HepG2 (cell line): ENCODE measurements at regions of chr5 and their contacts with region 1.

Region 1: GRCh38 chr5:60944904-60945812 is at the starts of genes ERCC8 and NDUFAF2:
- DNase-seq: peak; percentile 91
- ATAC-seq: peak; percentile 99
- H3K4me3 ChIP-seq: peak within 1 kb of the TSS; percentile 87 to 96 (median 90)
- H3K27ac ChIP-seq: peak within 1 kb of the TSS; percentile 79
- H3K4me1 ChIP-seq: peaks cover 52% of the 10 kb centered on the region
- H3K27me3 ChIP-seq: no peaks in the 10 kb centered on the region; a peak in 1 of 5 replicates
- CTCF ChIP-seq: 0 out of 2 replicates have a peak, but pooled peaks have one; percentile 3
- EP300 ChIP-seq: no peak
- POLR2A ChIP-seq: peak; percentile 69 to 78
- RAD21 ChIP-seq: no peak
- total RNA-seq, gene ERCC8: 35.2 and 60.1 TPM in 2 replicates
- total RNA-seq, gene NDUFAF2: 78.4 and 111 TPM in 2 replicates

Region 2: GRCh38 chr5:60668686-60669304 is 276.4 kb before region 1 on chr5:
- CTCF ChIA-PET with region 1: no interaction called
- POLR2A ChIA-PET with region 1: no interaction called
- in situ Hi-C with region 1: loop called (anchors 10 kb)
- intact Hi-C with region 1: loop called (anchors 5 kb)
- DNase-seq: peak; percentile 33
- ATAC-seq: no peak
- H3K4me3 ChIP-seq: no peak overlapping the region; a peak in 2 of 6 replicates
- H3K27ac ChIP-seq: peak overlapping the region; percentile 50
- H3K4me1 ChIP-seq: peaks cover 56% of the 10 kb centered on the region
- H3K27me3 ChIP-seq: no peaks in the 10 kb centered on the region
- CTCF ChIP-seq: peak; percentile 43; the same call in 1 of the 2 replicates
- EP300 ChIP-seq: no peak
- POLR2A ChIP-seq: no peak
- RAD21 ChIP-seq: no peak